MCF 10A (cell line): ENCODE measurements at regions of chr15 and their contacts with region 1.

Region 1: GRCh38 chr15:51192521-51193280 is 98.0 kb upstream of the TNFAIP8L3 start:
- DNase-seq: peak; percentile 91
- H3K4me3 Mint-ChIP-seq: no peak overlapping the region
- H3K27ac Mint-ChIP-seq: peak overlapping the region; percentile 7
- H3K4me1 Mint-ChIP-seq: peaks cover 24% of the 10 kb centered on the region
- H3K27me3 Mint-ChIP-seq: no peaks in the 10 kb centered on the region
- CTCF ChIP-seq: peak; percentile 89

Region 2: DNA sequence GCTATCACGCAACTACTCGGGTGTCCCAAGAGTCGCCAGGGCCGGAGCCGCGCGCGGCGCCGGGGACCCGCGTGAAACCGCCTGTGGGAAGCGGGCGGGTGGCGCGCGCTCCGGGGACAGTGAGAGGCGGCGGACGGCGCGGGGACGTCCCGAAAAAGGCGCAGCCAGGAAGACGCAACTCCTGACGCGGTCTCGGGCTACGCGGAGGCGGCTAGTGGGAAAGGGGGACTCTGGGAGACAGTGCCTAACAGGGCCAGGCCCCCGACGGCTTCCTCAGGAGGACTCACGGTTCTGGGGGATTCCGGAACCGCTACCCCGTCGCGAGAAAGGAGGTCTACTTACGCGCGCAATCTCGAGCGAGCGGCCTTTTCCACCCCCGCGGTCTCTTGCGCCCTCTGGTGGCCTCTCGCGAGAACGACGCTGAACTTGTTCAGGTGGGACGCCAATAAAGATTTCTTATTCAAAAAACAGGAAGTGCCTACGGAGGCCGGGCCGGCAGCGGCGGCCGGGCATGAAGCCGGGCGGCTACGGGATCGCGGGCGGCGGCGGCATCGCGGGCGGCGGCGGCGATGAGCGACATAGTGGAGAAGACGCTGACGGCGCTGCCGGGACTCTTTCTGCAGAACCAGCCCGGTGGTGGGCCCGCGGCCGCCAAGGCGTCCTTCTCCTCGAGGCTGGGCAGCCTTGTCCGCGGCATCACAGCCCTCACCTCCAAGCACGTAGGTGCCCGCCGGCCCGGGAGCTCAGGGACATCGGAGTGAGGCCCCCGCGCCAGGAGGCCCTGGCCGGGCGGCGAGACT is 284.3 kb before region 1 on chr15 and contains the start of gene AP4E1:
- CTCF ChIA-PET with region 1: no interaction called
- POLR2A ChIA-PET with region 1: interaction called, 5 read pairs
- intact Hi-C with region 1: loop called (anchors 1 kb)
- DNase-seq: peak; percentile 91
- H3K4me3 Mint-ChIP-seq: peak within 1 kb of the TSS; percentile 81
- H3K27ac Mint-ChIP-seq: peak within 1 kb of the TSS; percentile 81
- H3K4me1 Mint-ChIP-seq: no peaks in the 10 kb centered on the region
- H3K27me3 Mint-ChIP-seq: no peaks in the 10 kb centered on the region
- CTCF ChIP-seq: peak; percentile 97
- total RNA-seq, gene AP4E1: 25.5 and 28.2 TPM in 2 replicates

Region 3: GRCh38 chr15:51132384-51133139 is 60.1 kb before region 1 on chr15:
- CTCF ChIA-PET with region 1: interaction called, 8 read pairs
- POLR2A ChIA-PET with region 1: no interaction called
- intact Hi-C with region 1: loop called (anchors 1 kb)
- DNase-seq: peak; percentile 94
- H3K4me3 Mint-ChIP-seq: no peak overlapping the region
- H3K27ac Mint-ChIP-seq: peak overlapping the region; percentile 77
- H3K4me1 Mint-ChIP-seq: peaks cover 47% of the 10 kb centered on the region
- H3K27me3 Mint-ChIP-seq: no peaks in the 10 kb centered on the region
- CTCF ChIP-seq: peak; percentile 82

Region 4: DNA sequence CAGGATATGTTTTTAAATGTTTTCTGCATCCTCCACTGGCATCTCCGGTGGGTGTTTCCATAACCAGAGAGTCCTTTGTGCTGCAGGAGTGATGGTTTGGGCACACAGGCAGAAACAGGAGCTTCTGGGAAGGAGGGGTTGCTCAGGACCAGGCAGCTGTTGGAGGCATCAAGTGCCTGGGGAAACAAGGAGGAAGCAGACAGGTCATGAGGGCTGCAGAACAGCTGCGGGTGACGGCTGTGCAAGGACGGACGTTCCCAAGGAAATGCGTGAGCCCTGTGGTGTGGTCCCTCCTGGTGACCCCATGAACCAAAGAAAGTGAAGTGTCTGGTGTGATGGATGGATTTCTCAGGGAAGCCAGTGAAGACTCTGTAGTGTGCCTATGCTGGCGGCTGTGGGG is 36.8 kb before region 1 on chr15:
- CTCF ChIA-PET with region 1: interaction called, 15 read pairs
- POLR2A ChIA-PET with region 1: no interaction called
- intact Hi-C with region 1: no loop called
- DNase-seq: no peak
- H3K4me3 Mint-ChIP-seq: no peak overlapping the region
- H3K27ac Mint-ChIP-seq: peak overlapping the region; percentile 31
- H3K4me1 Mint-ChIP-seq: peaks cover 14% of the 10 kb centered on the region
- H3K27me3 Mint-ChIP-seq: no peaks in the 10 kb centered on the region
- CTCF ChIP-seq: no peak

Region 5: GRCh38 chr15:51172193-51172592 is 20.5 kb before region 1 on chr15:
- CTCF ChIA-PET with region 1: interaction called, 19 read pairs
- POLR2A ChIA-PET with region 1: no interaction called
- intact Hi-C with region 1: no loop called
- DNase-seq: no peak
- H3K4me3 Mint-ChIP-seq: no peak overlapping the region
- H3K27ac Mint-ChIP-seq: no peak overlapping the region
- H3K4me1 Mint-ChIP-seq: no peaks in the 10 kb centered on the region
- H3K27me3 Mint-ChIP-seq: no peaks in the 10 kb centered on the region
- CTCF ChIP-seq: no peak

Region 6: DNA sequence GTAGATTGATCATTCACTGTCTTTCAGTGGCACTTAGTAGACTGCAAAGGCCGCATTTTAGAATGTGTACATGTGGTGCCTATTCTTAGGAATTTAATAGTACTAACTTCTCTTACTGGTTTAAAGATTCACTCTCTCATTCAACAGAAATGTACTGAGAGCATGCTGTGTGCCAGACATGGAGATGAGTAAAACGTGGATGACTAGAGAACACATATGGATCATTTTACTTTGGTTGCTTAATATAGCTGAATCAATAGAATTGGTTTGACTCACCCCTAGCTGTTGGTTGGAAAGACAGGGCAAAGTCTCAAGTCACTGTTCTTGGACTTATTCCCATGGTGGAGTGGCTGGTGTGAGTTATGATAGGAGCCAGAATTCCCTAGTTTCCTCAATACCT is 11.1 kb after region 1 on chr15:
- CTCF ChIA-PET with region 1: interaction called, 25 read pairs
- POLR2A ChIA-PET with region 1: interaction called, 7 read pairs
- intact Hi-C with region 1: no loop called
- DNase-seq: peak; percentile 78
- H3K4me3 Mint-ChIP-seq: no peak overlapping the region
- H3K27ac Mint-ChIP-seq: no peak overlapping the region
- H3K4me1 Mint-ChIP-seq: peaks cover 19% of the 10 kb centered on the region
- H3K27me3 Mint-ChIP-seq: no peaks in the 10 kb centered on the region
- CTCF ChIP-seq: no peak